ENCODE measurements at regions of chr6 and their contacts with region 1.

Region 1: GRCh38 chr6:11428895-11429294 is 108.7 kb upstream of the TMEM170B start:
- DNase-seq: peak; percentile 83
- ATAC-seq: peak; percentile 81
- H3K4me3 ChIP-seq: no peak overlapping the region
- H3K27ac ChIP-seq: peak overlapping the region; percentile 51; the same call in 1 of the 2 replicates
- H3K4me1 ChIP-seq: peaks cover 33% of the 10 kb centered on the region
- H3K27me3 ChIP-seq: no peaks in the 10 kb centered on the region
- CTCF ChIP-seq: no peak
- EP300 ChIP-seq: peak in 1 of 2 experiments; percentile 65; a peak in 2 of 4 replicates
- POLR2A ChIP-seq: no peak
- RAD21 ChIP-seq: no peak

Region 2: DNA sequence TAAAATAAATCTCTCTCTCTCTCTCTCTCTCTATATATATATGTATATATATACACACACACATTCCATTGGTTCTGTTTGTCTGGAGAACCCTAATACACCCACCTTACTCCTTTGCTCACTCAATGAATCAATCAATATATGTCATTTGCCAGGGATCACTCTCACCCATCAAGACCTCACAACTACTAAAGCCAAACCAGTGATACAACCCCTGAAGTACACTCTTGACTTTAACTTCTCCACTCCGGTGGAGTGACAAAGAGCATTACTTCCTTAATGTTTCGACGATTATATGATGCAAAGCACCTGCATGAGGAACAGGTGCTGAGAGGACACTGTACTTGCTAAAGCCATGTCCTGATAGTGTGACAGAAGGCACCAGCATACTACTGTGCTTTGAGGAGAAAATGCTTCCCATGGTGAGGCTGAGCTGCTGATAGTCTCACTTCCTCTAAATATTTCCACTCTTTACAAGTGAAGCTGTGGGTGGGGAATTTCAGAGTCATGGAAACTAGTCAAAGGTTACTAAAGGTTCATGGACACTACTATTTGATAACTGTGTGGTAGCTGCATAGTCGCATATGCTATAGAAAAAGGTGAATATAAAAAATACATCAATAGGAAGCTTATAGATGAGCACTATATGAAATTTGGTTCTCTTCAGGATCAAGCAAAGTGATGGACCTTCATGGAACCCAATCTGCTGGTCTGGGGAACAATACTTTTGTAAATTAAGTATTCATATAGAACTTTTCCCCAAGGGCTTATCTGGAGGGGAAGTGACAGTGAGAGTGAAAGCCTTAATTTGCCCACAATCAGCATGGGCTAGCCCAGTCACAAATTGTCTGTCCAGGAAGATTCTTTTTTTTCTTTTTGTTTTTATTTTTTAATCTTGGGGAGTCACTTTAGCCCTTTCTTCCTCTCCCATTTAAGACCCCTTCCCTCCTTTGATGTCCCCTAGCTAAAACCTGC is 54.6 kb before region 1 on chr6:
- CTCF ChIA-PET with region 1: no interaction called
- POLR2A ChIA-PET with region 1: interaction called, 8 read pairs
- RAD21 ChIA-PET with region 1: interaction called, 82 read pairs
- SMC1A ChIA-PET with region 1: interaction called, 190 read pairs
- in situ Hi-C with region 1: no loop called
- intact Hi-C with region 1: loop called (anchors 2 kb)
- DNase-seq: peak; percentile 96
- ATAC-seq: peak; percentile 85
- H3K4me3 ChIP-seq: 0 out of 2 replicates have a peak overlapping the region, but pooled peaks have one; percentile 44
- H3K27ac ChIP-seq: peak overlapping the region; percentile 89
- H3K4me1 ChIP-seq: peaks cover 44% of the 10 kb centered on the region
- H3K27me3 ChIP-seq: no peaks in the 10 kb centered on the region
- CTCF ChIP-seq: no peak
- EP300 ChIP-seq: peak; percentile 83 to 95
- POLR2A ChIP-seq: peak; percentile 43; the same call in 1 of the 2 replicates
- RAD21 ChIP-seq: peak; percentile 25

Region 3: GRCh38 chr6:11595903-11596302 is 167.0 kb after region 1 on chr6:
- CTCF ChIA-PET with region 1: no interaction called
- POLR2A ChIA-PET with region 1: no interaction called
- RAD21 ChIA-PET with region 1: no interaction called
- SMC1A ChIA-PET with region 1: no interaction called
- in situ Hi-C with region 1: no loop called
- intact Hi-C with region 1: no loop called
- DNase-seq: no peak
- ATAC-seq: peak; percentile 37; the same call in 2 of the 3 replicates
- H3K4me3 ChIP-seq: no peak overlapping the region
- H3K27ac ChIP-seq: no peak overlapping the region
- H3K4me1 ChIP-seq: no peaks in the 10 kb centered on the region
- H3K27me3 ChIP-seq: 0 out of 4 replicates have a peak, but pooled peaks cover 0 to 2% of the 10 kb centered on the region in 2 experiments
- CTCF ChIP-seq: peak in 2 of 3 experiments; percentile 20; a peak in 2 of 6 replicates
- EP300 ChIP-seq: no peak
- POLR2A ChIP-seq: no peak
- RAD21 ChIP-seq: no peak

Region 4: DNA sequence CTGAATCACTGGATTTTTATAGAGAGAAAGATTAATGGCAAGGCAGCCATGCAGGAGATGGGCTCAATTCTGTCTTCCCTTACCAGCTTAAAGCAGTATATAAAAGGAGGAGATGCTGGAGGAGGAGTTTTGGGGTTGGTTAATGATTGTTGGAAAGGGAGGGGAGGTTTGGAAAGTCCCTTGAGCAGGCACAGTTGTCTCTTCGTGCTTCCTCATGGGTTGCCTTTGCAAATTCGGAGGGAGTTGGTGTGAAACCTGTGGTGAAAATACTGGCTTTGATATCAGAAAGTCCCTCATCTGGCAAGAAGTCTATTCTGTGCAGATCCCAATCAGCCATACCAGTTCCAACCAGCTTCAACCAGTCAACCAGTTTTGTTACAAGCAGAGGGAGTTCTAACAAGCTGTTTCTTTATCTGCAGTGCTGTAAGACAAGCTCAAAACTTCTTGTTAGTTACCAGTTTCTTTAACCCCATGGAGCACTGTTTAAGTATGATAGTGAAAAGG is 690.2 kb after region 1 on chr6:
- CTCF ChIA-PET with region 1: no interaction called
- POLR2A ChIA-PET with region 1: no interaction called
- RAD21 ChIA-PET with region 1: no interaction called
- SMC1A ChIA-PET with region 1: no interaction called
- in situ Hi-C with region 1: no loop called
- intact Hi-C with region 1: no loop called
- DNase-seq: peak; percentile 97
- ATAC-seq: peak; percentile 83
- H3K4me3 ChIP-seq: peak overlapping the region; percentile 34; the same call in 1 of the 2 replicates
- H3K27ac ChIP-seq: peak overlapping the region; percentile 92
- H3K4me1 ChIP-seq: peaks cover 34% of the 10 kb centered on the region
- H3K27me3 ChIP-seq: no peaks in the 10 kb centered on the region
- CTCF ChIP-seq: no peak
- EP300 ChIP-seq: peak; percentile 82 to 90; a peak in 3 of 4 replicates
- POLR2A ChIP-seq: no peak
- RAD21 ChIP-seq: no peak